CD8-positive, alpha-beta memory T cell (primary cell): ENCODE measurements at regions of chr2 and their contacts with region 1.

Region 1: DNA sequence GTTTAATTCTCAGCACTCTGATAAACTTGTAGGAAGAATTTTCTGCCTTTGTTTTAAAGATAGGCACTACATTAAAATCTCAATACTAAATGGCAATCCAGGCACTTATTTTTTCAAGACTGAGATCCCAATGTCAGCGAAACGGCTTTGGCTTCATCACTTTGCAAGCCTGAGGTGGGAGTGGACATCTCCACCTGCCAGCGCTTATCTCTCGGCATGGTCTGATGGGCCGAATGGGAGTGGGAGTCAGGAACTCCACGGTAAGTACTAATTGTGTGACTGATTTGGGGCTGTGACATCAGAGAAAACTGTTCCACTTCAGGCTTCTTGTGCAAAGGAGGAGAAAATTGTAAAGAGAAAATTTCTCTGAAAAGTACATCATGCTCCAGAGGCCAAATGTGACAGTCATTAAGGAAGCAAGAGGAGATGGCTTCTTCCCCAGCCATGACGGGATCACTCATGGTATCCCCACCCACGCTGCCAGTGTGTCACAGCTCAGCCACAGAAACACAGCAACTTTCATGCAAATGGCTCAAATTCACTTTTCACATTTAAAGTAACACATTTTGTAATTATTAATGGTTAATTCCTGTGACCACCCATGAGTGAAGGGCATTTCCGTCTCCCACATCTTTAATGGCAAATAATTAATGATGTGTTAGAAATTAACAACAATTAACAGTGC is 385.5 kb upstream of the HNRNPA3 start:
- DNase-seq: no peak
- H3K4me3 ChIP-seq: no peak overlapping the region
- H3K4me3 Mint-ChIP-seq: peak overlapping the region in 6 of 7 donors; percentile 4 to 72 (median 40)
- H3K27ac ChIP-seq: no peak overlapping the region
- H3K27ac Mint-ChIP-seq: peak overlapping the region; percentile 49 to 91 (median 74)
- H3K4me1 ChIP-seq: peaks cover 35% of the 10 kb centered on the region
- H3K4me1 Mint-ChIP-seq: peaks cover 26 to 40% (median 39%) of the 10 kb centered on the region in 3 donors
- H3K27me3 ChIP-seq: no peaks in the 10 kb centered on the region
- H3K27me3 Mint-ChIP-seq: no peaks in the 10 kb centered on the region

Region 2: DNA sequence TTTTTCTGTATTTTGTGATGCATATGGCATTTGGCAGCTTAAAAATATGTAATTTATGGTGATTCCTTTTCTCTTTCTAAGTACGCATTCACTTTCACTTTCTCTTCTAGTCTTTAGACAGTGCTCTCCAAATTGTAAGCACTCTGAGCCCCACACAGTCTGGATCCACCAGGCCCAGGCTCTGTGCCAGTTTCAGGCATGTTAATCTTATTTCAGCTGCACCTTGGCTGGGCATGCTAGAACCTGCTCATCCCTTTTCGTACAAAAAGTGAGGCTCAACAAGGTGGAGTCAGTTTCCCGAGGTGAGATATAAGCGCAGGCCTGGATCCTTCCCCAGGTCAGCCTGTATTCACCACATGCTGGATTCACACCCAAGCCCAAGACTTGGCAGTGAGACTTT is 353.9 kb before region 1 on chr2:
- CTCF ChIA-PET with region 1: no interaction called
- POLR2A ChIA-PET with region 1: no interaction called
- DNase-seq: no peak
- H3K4me3 ChIP-seq: no peak overlapping the region
- H3K4me3 Mint-ChIP-seq: peak overlapping the region in 6 of 7 donors; percentile 52 to 78 (median 73)
- H3K27ac ChIP-seq: no peak overlapping the region
- H3K27ac Mint-ChIP-seq: peak overlapping the region in 5 of 8 donors; percentile 9 to 77 (median 53)
- H3K4me1 ChIP-seq: peaks cover 7% of the 10 kb centered on the region
- H3K4me1 Mint-ChIP-seq: peaks cover 14 to 20% (median 19%) of the 10 kb centered on the region in 3 donors
- H3K27me3 ChIP-seq: no peaks in the 10 kb centered on the region
- H3K27me3 Mint-ChIP-seq: peaks cover 6 to 23% of the 10 kb centered on the region in 2 donors

Region 3: DNA sequence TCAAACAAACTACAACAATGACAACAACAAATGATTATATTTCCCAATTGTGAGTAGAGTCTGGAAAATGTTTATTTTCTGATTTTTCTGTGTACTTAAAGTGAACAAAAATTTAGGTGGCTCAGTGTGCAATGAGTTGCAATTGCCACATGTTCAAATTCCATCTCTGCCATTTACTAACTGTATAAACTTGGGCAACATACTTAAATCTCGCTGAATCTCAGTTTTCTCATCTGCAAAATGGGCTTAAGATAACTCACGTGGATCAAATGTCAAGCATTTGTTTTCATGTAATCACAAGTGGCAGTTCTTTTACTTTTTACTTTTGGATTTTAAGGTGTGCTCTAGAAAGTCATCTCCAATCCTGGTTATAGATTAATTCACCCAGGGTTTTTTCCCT is 31.3 kb before region 1 on chr2:
- CTCF ChIA-PET with region 1: no interaction called
- POLR2A ChIA-PET with region 1: no interaction called
- DNase-seq: no peak
- H3K4me3 ChIP-seq: no peak overlapping the region
- H3K4me3 Mint-ChIP-seq: no peak overlapping the region
- H3K27ac ChIP-seq: no peak overlapping the region
- H3K27ac Mint-ChIP-seq: no peak overlapping the region
- H3K4me1 ChIP-seq: no peaks in the 10 kb centered on the region
- H3K4me1 Mint-ChIP-seq: no peaks in the 10 kb centered on the region
- H3K27me3 ChIP-seq: no peaks in the 10 kb centered on the region
- H3K27me3 Mint-ChIP-seq: peaks cover 16 to 43% of the 10 kb centered on the region in 2 donors

Region 4: DNA sequence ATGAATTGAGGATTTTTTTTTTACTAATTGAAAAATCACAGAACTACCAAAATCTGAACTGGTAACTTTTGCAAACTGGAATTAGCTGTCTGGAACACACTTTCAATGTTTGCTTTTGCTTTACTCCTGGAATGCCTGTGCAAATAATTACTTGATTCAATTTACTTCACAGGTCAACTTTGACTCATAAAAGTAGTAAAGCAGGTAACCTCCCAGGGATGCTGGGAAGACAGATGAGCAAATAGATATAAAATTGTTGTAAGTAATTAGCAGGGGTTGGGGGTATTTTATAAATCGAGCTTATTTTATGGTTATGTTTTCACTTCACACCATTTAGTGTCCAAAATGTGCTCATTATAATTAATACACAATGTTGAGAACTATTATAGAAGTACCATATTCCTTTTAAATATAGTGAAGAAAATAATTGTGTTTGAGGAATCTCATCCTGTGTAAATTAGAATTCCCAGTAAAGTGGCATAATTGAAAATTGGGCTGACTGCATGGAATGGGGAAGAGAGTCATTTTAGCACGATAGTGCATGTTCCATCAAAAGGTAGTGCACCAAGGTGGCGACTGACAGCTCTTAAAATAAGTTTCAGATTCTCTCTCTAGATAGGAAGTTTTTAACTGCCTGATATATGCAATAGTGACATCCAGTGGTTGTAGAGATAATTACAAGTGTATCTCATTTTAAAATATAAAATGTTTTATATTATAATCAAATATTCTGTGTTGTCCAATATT is 12.6 kb before region 1 on chr2:
- CTCF ChIA-PET with region 1: interaction called, 16 read pairs
- POLR2A ChIA-PET with region 1: interaction called, 3 read pairs
- DNase-seq: peak in 2 of 5 donors; percentile 23 to 40
- H3K4me3 ChIP-seq: no peak overlapping the region
- H3K4me3 Mint-ChIP-seq: peak overlapping the region in 4 of 7 donors; percentile 7 to 37 (median 15)
- H3K27ac ChIP-seq: no peak overlapping the region
- H3K27ac Mint-ChIP-seq: peak overlapping the region in 1 of 8 donors; percentile 41
- H3K4me1 ChIP-seq: peaks cover 4% of the 10 kb centered on the region
- H3K4me1 Mint-ChIP-seq: peaks cover 3 to 11% (median 8%) of the 10 kb centered on the region in 3 donors
- H3K27me3 ChIP-seq: no peaks in the 10 kb centered on the region
- H3K27me3 Mint-ChIP-seq: peaks cover 0 to 7% of the 10 kb centered on the region in 2 donors